Common myeloid progenitor, CD34-positive (primary cell): ENCODE measurements at regions of chr3 and their contacts with region 1.

Region 1: GRCh38 chr3:36933540-36934296 is 11.1 kb downstream of the TRANK1 start:
- DNase-seq: no peak
- H3K4me3 ChIP-seq: no peak overlapping the region
- H3K27ac ChIP-seq: no peak overlapping the region
- H3K4me1 ChIP-seq: peaks cover 0 to 7% (median 3%) of the 10 kb centered on the region in 4 experiments
- H3K27me3 ChIP-seq: no peaks in the 10 kb centered on the region

Region 2: DNA sequence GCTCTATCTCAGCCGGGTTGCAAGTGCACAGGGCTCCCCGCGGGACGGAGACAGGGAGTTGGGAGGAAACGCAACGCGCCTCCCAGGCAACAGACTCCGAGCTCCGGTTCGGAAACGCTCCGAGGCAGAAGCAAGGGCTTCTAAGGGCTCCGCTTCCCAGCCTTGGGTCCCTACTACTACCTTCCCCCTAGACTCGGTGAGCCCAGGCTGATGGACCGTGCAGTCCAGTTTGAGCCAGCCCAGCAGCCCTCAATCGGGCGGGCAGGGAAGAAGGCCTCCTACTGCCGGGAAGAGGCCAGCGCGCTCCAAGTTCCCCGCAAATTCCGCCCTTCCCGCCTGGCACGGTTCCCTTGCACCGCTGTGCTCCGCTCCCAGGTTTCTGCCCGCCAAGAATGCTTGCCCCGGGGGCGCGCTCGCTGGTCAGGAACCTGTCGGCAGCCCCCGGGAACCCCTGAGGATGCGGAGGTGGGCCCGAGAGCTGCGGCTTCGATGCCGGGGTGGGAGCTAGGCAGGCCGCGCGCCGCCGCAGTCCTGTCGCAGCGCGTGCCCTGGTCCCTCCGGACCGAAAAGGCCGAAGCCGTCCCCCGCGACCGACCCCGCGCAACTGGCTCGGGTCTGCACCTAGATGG is 10.4 kb after region 1 on chr3:
- CTCF ChIA-PET with region 1: interaction called, 28 read pairs
- POLR2A ChIA-PET with region 1: interaction called, 3 read pairs
- DNase-seq: peak in 2 of 3 donors; percentile 60 to 72
- H3K4me3 ChIP-seq: peak overlapping the region; percentile 70 to 92 (median 84)
- H3K27ac ChIP-seq: peak overlapping the region; percentile 40 to 72
- H3K4me1 ChIP-seq: peaks cover 0 to 18% (median 16%) of the 10 kb centered on the region in 4 experiments
- H3K27me3 ChIP-seq: no peaks in the 10 kb centered on the region